CD4-positive, alpha-beta memory T cell (primary cell): ENCODE measurements at regions of chr6 and their contacts with region 1.

Region 1: GRCh38 chr6:142387997-142388815 is 86.4 kb downstream of the ADGRG6 start:
- DNase-seq: peak in 4 of 5 donors; percentile 7 to 30 (median 11)
- H3K4me3 ChIP-seq: no peak overlapping the region
- H3K4me3 Mint-ChIP-seq: no peak overlapping the region
- H3K27ac ChIP-seq: no peak overlapping the region
- H3K27ac Mint-ChIP-seq: no peak overlapping the region
- H3K4me1 ChIP-seq: no peaks in the 10 kb centered on the region
- H3K4me1 Mint-ChIP-seq: no peaks in the 10 kb centered on the region
- H3K27me3 ChIP-seq: no peaks in the 10 kb centered on the region
- H3K27me3 Mint-ChIP-seq: peaks cover 0 to 3% of the 10 kb centered on the region in 2 donors

Region 2: DNA sequence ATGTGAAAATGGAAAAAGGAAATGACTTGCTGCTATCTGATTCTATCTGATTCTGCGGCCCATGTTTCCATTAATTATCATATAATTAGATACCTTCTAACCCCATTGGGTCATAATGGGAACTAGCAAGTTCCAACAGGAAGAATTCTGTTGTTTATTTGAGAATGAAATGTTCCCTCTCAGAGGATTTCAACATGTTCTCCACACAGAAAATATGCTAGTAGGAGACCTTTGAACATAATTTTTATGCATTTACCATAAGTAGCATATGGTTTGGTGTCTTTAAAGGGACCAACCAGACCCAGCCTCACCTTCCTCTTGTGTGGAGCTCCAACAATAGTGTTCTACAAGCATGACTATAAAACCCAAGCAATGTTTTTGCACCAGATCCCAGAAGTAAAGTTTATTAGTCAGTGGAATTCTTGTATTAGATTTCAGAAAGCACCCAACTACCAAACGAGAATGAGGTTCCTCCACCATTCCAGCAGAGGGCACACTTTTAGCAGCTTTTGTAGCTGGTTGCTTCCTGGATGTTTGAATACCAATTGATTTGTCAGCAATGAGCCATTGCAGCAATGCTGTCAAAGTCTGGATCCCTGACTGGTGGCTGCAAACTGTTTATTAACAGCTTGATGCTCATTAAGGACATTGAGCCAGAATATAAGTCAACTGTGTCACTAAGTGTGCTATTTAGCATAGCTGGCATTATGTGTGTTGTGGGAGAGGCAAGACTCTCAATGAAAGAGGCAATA is 399.1 kb before region 1 on chr6:
- CTCF ChIA-PET with region 1: no interaction called
- POLR2A ChIA-PET with region 1: no interaction called
- intact Hi-C with region 1: loop called (anchors 5 kb)
- DNase-seq: peak; percentile 21 to 33 (median 26)
- H3K4me3 ChIP-seq: no peak overlapping the region
- H3K4me3 Mint-ChIP-seq: no peak overlapping the region
- H3K27ac ChIP-seq: no peak overlapping the region
- H3K27ac Mint-ChIP-seq: no peak overlapping the region
- H3K4me1 ChIP-seq: no peaks in the 10 kb centered on the region
- H3K4me1 Mint-ChIP-seq: peaks cover 0 to 6% (median 4%) of the 10 kb centered on the region in 4 donors
- H3K27me3 ChIP-seq: no peaks in the 10 kb centered on the region
- H3K27me3 Mint-ChIP-seq: peaks cover 1 to 4% of the 10 kb centered on the region in 2 donors